ENCODE measurements at regions of chr4 and their contacts with region 1.

Region 1: GRCh38 chr4:183840311-183840710 is 64.8 kb upstream of the STOX2 start:
- DNase-seq: peak; percentile 46 to 61
- ATAC-seq: peak; percentile 45 to 76
- H3K4me3 ChIP-seq: no peak overlapping the region
- H3K27ac ChIP-seq: no peak overlapping the region
- H3K4me1 ChIP-seq: no peaks in the 10 kb centered on the region
- H3K27me3 ChIP-seq: no peaks in the 10 kb centered on the region
- CTCF ChIP-seq: peak; percentile 74 to 89 (median 81)
- POLR2A ChIP-seq: no peak

Region 2: GRCh38 chr4:184100297-184100885 is 260.1 kb after region 1 on chr4:
- in situ Hi-C with region 1: loop called in 1 of 4 experiments (anchors 10 kb)
- intact Hi-C with region 1: loop called (anchors 1 kb)
- DNase-seq: peak in 1 of 2 donors; percentile 20
- ATAC-seq: peak in 1 of 2 donors; percentile 36
- H3K4me3 ChIP-seq: no peak overlapping the region
- H3K27ac ChIP-seq: no peak overlapping the region
- H3K4me1 ChIP-seq: no peaks in the 10 kb centered on the region
- H3K27me3 ChIP-seq: peaks cover 0 to 8% (median 2%) of the 10 kb centered on the region in 3 donors
- CTCF ChIP-seq: peak in 3 of 5 experiments; percentile 44 to 58 (median 53)
- POLR2A ChIP-seq: no peak

Region 3: GRCh38 chr4:184168406-184169019 is 328.2 kb after region 1 on chr4:
- in situ Hi-C with region 1: loop called (anchors 5 kb)
- intact Hi-C with region 1: loop called (anchors 1 kb)
- DNase-seq: peak; percentile 25 to 39
- ATAC-seq: peak; percentile 81 to 91
- H3K4me3 ChIP-seq: peak overlapping the region in 1 of 4 donors; percentile 12
- H3K27ac ChIP-seq: no peak overlapping the region
- H3K4me1 ChIP-seq: peaks cover 0 to 4% of the 10 kb centered on the region in 2 donors
- H3K27me3 ChIP-seq: no peaks in the 10 kb centered on the region
- CTCF ChIP-seq: peak; percentile 85 to 98 (median 88)
- POLR2A ChIP-seq: no peak